Activated naive CD4-positive, alpha-beta T cell treated with anti-CD3 and anti-CD28 coated beads for 36 hours (primary cell): ENCODE measurements at regions of chr2 and their contacts with region 1.

Region 1: GRCh38 chr2:236180831-236181453 is 12.8 kb upstream of the GBX2 start:
- DNase-seq: peak; percentile 61
- H3K4me3 Mint-ChIP-seq: no peak overlapping the region
- H3K27ac Mint-ChIP-seq: no peak overlapping the region
- H3K4me1 Mint-ChIP-seq: peaks cover 12% of the 10 kb centered on the region
- H3K27me3 Mint-ChIP-seq: peaks cover 74% of the 10 kb centered on the region

Region 2: DNA sequence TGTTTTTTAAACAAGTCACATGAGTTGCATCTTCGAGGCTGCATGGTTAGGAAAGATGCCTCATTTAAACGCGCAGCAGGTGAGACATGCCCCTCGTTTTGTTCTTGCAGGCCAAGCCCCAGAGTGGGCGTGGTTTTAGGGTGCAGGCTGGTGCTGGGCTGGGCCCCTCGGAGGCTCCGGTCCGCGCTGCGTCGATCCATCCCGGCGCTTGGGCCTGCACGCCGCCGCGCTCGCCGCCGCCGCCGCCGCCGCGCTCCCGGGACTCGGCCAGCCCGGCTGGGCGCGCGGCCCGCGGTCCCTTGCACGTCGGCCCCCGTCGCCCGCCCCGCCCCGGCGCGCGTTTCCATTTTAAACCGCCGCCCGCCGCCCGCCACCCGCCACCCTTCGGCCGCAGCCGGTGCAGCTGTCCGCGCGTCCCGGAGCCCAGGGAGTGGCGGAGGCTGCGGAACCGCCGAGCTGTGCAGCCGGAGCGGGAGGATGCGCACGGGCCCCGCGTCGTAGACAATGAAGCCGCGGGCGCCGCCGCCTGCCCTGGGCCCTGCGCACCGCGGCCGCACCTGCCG is 511.6 kb before region 1 on chr2:
- CTCF ChIA-PET with region 1: no interaction called
- intact Hi-C with region 1: loop called (anchors 10 kb)
- DNase-seq: peak; percentile 9
- H3K4me3 Mint-ChIP-seq: no peak overlapping the region
- H3K27ac Mint-ChIP-seq: no peak overlapping the region
- H3K4me1 Mint-ChIP-seq: peaks cover 6% of the 10 kb centered on the region
- H3K27me3 Mint-ChIP-seq: peaks cover 50% of the 10 kb centered on the region

Region 3: DNA sequence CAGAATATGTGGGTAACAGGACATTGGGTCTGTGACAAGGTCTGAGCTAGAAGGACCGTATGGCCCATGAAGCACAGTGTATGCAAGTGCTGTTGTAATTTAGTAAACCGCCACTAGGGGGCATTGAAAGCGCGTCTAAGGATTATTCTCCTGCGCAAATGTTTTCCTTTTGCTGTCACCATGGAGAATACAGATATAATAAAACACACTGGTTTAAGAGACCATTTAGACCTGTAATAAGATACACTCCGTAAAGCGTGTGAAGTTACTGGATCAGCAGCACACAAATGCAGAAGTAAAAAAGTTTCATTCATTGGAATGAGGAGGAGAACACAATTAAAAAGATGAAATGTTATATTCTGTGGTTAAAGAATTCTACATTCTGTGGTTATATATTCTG is 414.7 kb before region 1 on chr2:
- CTCF ChIA-PET with region 1: interaction called, 5 read pairs
- intact Hi-C with region 1: loop called (anchors 1 kb)
- DNase-seq: peak; percentile 65
- H3K4me3 Mint-ChIP-seq: no peak overlapping the region
- H3K27ac Mint-ChIP-seq: no peak overlapping the region
- H3K4me1 Mint-ChIP-seq: peaks cover 2% of the 10 kb centered on the region
- H3K27me3 Mint-ChIP-seq: peaks cover 7% of the 10 kb centered on the region

Region 4: GRCh38 chr2:235779444-235779896 is 401.5 kb before region 1 on chr2:
- CTCF ChIA-PET with region 1: interaction called, 44 read pairs
- intact Hi-C with region 1: loop called (anchors 1 kb)
- DNase-seq: peak; percentile 80
- H3K4me3 Mint-ChIP-seq: no peak overlapping the region
- H3K27ac Mint-ChIP-seq: no peak overlapping the region
- H3K4me1 Mint-ChIP-seq: no peaks in the 10 kb centered on the region
- H3K27me3 Mint-ChIP-seq: peaks cover 29% of the 10 kb centered on the region

Region 5: GRCh38 chr2:235936493-235936892 is 244.4 kb before region 1 on chr2:
- CTCF ChIA-PET with region 1: interaction called, 3 read pairs
- intact Hi-C with region 1: loop called (anchors 2 kb)
- DNase-seq: peak; percentile 15
- H3K4me3 Mint-ChIP-seq: no peak overlapping the region
- H3K27ac Mint-ChIP-seq: no peak overlapping the region
- H3K4me1 Mint-ChIP-seq: no peaks in the 10 kb centered on the region
- H3K27me3 Mint-ChIP-seq: peaks cover 7% of the 10 kb centered on the region

Region 6: DNA sequence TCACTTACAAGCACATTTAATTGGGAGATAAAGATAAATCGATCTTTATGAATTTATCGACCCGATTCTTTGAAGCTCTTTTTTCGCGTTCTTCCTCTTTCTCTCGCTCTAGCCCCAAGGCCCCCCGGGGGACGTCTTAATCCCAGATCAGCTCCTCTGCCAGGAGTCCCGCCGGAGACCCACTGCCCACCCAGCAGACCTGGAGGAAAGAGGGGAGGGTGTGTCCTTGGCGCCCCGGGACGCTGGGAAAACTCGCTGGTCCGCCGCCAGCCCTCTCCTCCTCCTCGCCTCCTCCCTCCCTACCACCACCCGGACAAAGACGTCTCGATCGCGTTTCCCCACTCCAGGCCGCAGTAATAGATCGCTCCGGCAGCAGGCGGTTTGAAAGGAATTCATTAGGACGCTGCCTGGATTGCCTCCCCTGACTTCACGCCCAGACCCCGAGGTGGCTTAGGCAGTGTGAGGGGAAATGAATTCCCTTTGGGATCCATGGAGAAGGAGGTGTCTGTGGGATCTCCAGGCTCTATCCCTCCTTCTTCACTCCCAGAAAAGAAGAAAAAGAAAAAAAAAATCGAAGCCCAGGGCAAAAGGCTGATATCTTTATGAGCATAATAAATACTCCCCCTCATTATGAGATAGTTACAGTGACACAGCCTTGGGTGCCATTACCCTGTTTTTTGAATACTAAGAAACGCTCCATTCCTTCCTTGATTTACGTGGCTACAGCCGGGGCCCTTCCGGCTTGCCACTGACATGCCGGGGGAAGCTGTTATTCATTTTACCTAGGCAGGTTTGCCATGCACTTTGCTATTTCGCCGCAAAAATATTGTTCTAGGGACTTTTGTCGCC is 11.0 kb before region 1 on chr2:
- CTCF ChIA-PET with region 1: interaction called, 9 read pairs
- intact Hi-C with region 1: loop called (anchors 1 kb)
- DNase-seq: no peak
- H3K4me3 Mint-ChIP-seq: no peak overlapping the region
- H3K27ac Mint-ChIP-seq: no peak overlapping the region
- H3K4me1 Mint-ChIP-seq: peaks cover 18% of the 10 kb centered on the region
- H3K27me3 Mint-ChIP-seq: peaks cover 71% of the 10 kb centered on the region

Region 7: GRCh38 chr2:236417150-236417549 is 236.2 kb after region 1 on chr2:
- CTCF ChIA-PET with region 1: no interaction called
- intact Hi-C with region 1: no loop called
- DNase-seq: no peak
- H3K4me3 Mint-ChIP-seq: no peak overlapping the region
- H3K27ac Mint-ChIP-seq: no peak overlapping the region
- H3K4me1 Mint-ChIP-seq: no peaks in the 10 kb centered on the region
- H3K27me3 Mint-ChIP-seq: peaks cover 9% of the 10 kb centered on the region